PC-9 (cell line): ENCODE measurements at regions of chr6 and their contacts with region 1.

Region 1: GRCh38 chr6:166275714-166276166 is 32.5 kb downstream of the PRR18 start:
- DNase-seq: peak in 1 of 2 experiments; percentile 64
- H3K4me3 ChIP-seq: no peak overlapping the region
- H3K27ac ChIP-seq: no peak overlapping the region
- H3K4me1 ChIP-seq: no peaks in the 10 kb centered on the region
- H3K27me3 ChIP-seq: peaks cover 7% of the 10 kb centered on the region; the same call in 1 of the 2 replicates
- CTCF ChIP-seq: peak; percentile 93

Region 2: DNA sequence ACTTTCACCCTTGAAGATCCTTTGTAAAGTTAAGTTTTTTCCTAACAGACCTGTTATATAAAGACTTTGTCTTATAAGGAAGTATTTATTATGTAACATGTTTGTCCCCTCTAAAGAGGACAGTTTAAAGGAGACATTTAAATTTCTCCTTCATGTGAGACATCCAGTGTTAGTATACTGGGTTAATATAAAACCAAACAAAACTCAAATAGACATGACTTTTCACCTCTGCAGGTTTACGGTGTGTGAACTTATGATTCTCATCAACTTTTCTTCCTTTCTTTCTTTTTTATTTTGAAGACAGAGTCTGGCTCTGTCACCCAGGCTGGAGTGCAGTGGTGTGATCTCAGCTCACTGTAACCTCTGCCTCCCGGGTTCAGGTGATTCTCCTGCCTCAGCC is 124.4 kb after region 1 on chr6:
- CTCF ChIA-PET with region 1: interaction called, 3 read pairs
- POLR2A ChIA-PET with region 1: no interaction called
- intact Hi-C with region 1: loop called (anchors 1 kb)
- DNase-seq: no peak
- H3K4me3 ChIP-seq: no peak overlapping the region
- H3K27ac ChIP-seq: no peak overlapping the region
- H3K4me1 ChIP-seq: no peaks in the 10 kb centered on the region
- H3K27me3 ChIP-seq: peaks cover 6% of the 10 kb centered on the region; the same call in 1 of the 2 replicates
- CTCF ChIP-seq: no peak

Region 3: GRCh38 chr6:167683028-167683862 is 1407.5 kb after region 1 on chr6:
- CTCF ChIA-PET with region 1: no interaction called
- POLR2A ChIA-PET with region 1: no interaction called
- intact Hi-C with region 1: no loop called
- DNase-seq: peak; percentile 12 to 37
- H3K4me3 ChIP-seq: no peak overlapping the region
- H3K27ac ChIP-seq: no peak overlapping the region
- H3K4me1 ChIP-seq: no peaks in the 10 kb centered on the region
- H3K27me3 ChIP-seq: peaks cover 80% of the 10 kb centered on the region
- CTCF ChIP-seq: no peak